ENCODE measurements at regions of chr1 and their contacts with region 1.

Region 1: DNA sequence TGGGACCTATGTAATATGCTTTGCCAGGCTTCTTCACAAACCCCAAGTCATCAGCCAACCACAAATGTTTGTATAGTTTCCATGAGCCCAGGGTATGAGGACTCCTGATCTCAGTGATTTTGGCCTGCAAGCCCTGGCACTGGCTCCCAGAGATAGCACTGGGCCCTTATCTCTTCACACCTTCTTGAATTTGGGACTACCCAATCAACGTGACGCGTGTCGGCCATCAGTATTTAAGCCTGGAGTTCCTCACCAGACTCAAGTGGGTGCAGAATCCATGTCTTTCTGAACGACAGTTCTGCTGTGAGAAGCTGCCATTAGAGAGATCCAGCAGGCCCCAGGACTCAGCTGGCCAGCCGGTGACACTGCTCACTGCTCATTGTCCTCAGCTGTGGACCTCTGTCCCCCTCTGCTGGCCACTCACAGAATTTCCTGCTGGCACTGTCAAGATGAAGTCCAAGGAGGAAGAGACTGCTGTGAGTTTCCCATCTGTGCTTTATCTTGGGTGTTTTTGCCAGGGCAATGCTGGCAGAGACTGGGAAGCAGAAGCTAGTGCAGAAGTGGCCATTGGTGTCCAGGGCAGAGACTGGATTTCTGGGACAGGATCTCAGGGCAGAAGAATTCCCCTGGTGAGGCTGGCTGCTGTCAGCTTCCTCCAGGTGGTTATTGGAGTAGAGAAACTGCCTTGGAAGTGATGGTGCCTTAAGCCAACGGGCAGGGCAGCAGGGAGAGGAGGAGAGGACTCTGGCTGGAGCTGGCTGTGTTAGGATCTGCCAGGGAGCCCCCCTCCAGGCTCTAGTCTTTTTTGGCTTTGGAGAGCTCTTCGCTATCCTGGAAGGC is 28.4 kb downstream of the TMCC2 start:
- DNase-seq: peak; percentile 94 to 97 (median 94)
- ATAC-seq: peak; percentile 99
- H3K4me3 ChIP-seq: no peak overlapping the region
- H3K27ac ChIP-seq: no peak overlapping the region
- H3K4me1 ChIP-seq: no peaks in the 10 kb centered on the region
- H3K27me3 ChIP-seq: no peaks in the 10 kb centered on the region
- CTCF ChIP-seq: peak; percentile 89 to 99 (median 98)
- POLR2A ChIP-seq: no peak

Region 2: DNA sequence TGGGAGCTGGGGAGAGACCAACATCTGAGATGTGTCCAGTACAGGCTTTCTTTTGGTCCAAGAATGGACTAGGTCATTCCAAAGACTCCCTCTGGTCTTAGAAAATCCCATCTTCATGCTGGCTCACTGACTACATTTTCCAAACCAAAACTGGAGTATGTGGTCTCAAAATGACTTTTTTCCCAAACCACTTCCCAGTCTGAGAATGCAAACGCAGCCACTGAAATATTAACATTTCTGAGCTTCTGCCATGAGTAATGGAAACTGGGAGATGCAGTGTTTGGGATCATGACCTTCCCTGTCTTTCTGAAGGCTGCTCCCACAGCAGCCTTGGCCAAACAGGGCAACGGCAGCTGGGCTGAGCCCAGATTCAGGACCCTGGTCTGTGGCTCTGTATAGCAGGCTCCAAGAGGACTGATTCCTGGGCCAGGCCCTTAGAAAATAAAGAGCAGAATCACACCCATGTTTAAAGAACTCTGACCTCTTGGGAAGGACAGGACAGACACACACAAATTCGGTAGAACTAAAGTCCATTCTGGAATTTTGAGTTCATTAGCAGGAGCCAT is 275.2 kb before region 1 on chr1:
- intact Hi-C with region 1: loop called (anchors 5 kb)
- DNase-seq: no peak
- ATAC-seq: no peak
- H3K4me3 ChIP-seq: no peak overlapping the region
- H3K27ac ChIP-seq: no peak overlapping the region
- H3K4me1 ChIP-seq: no peaks in the 10 kb centered on the region
- H3K27me3 ChIP-seq: no peaks in the 10 kb centered on the region
- CTCF ChIP-seq: no peak
- POLR2A ChIP-seq: no peak

Region 3: GRCh38 chr1:205547936-205548827 is 292.0 kb after region 1 on chr1:
- intact Hi-C with region 1: no loop called
- DNase-seq: no peak
- ATAC-seq: no peak
- H3K4me3 ChIP-seq: no peak overlapping the region
- H3K27ac ChIP-seq: no peak overlapping the region
- H3K4me1 ChIP-seq: no peaks in the 10 kb centered on the region
- H3K27me3 ChIP-seq: no peaks in the 10 kb centered on the region
- CTCF ChIP-seq: no peak
- POLR2A ChIP-seq: no peak